ENCODE measurements at regions of chr9 and their contacts with region 1.

Region 1: GRCh38 chr9:137589441-137590115 is 734 bp downstream of the ZMYND19 start:
- DNase-seq: peak; percentile 45
- ATAC-seq: peak; percentile 17
- H3K4me3 Mint-ChIP-seq: peak overlapping the region; percentile 86
- H3K27ac Mint-ChIP-seq: peak overlapping the region; percentile 79
- H3K4me1 Mint-ChIP-seq: peaks cover 22% of the 10 kb centered on the region
- H3K27me3 Mint-ChIP-seq: no peaks in the 10 kb centered on the region

Region 2: DNA sequence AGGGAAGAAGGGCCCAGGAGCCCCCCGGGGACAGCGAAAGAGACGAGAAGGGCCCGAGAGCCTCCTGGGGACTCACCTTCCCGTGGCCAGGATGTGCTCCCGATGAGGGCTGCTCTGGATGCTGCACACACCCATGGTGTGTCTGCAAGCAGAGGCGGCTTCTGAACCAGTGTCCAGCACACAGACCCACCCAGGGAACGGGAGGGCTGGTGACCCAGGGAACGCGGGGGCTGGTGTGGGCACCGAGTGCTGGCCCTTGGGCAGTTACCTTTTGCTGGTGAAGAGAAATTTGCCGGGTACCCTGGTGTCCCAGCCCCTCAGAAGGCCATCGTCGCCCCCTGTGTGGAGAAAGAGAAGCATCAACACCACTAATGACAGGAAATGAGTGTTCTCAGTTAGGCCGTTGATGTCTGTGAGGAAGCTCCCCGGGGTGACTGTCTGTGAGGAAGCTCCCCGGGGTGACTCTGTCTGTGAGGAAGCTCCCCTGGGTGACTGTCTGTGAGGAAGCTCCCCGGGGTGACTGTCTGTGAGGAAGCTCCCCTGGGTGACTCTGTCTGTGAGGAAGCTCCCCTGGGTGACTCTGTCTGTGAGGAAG is 24.7 kb before region 1 on chr9:
- CTCF ChIA-PET with region 1: no interaction called
- POLR2A ChIA-PET with region 1: no interaction called
- DNase-seq: no peak
- ATAC-seq: no peak
- H3K4me3 Mint-ChIP-seq: no peak overlapping the region
- H3K27ac Mint-ChIP-seq: peak overlapping the region; percentile 7
- H3K4me1 Mint-ChIP-seq: peaks cover 13% of the 10 kb centered on the region
- H3K27me3 Mint-ChIP-seq: no peaks in the 10 kb centered on the region

Region 3: GRCh38 chr9:137578518-137579258 is 10.9 kb before region 1 on chr9 and contains the start of gene DPH7:
- CTCF ChIA-PET with region 1: interaction called, 16 read pairs
- POLR2A ChIA-PET with region 1: interaction called, 9 read pairs
- DNase-seq: peak; percentile 96
- ATAC-seq: peak; percentile 99
- H3K4me3 Mint-ChIP-seq: peak within 1 kb of the TSS; percentile 81
- H3K27ac Mint-ChIP-seq: peak within 1 kb of the TSS; percentile 72
- H3K4me1 Mint-ChIP-seq: peaks cover 35% of the 10 kb centered on the region
- H3K27me3 Mint-ChIP-seq: no peaks in the 10 kb centered on the region
- total RNA-seq, gene DPH7: 36.8 to 37.1 TPM

Region 4: GRCh38 chr9:137602661-137603060 is 13.1 kb after region 1 on chr9:
- CTCF ChIA-PET with region 1: interaction called, 10 read pairs
- POLR2A ChIA-PET with region 1: interaction called, 3 read pairs
- DNase-seq: no peak
- ATAC-seq: no peak
- H3K4me3 Mint-ChIP-seq: no peak overlapping the region
- H3K27ac Mint-ChIP-seq: no peak overlapping the region
- H3K4me1 Mint-ChIP-seq: peaks cover 36% of the 10 kb centered on the region
- H3K27me3 Mint-ChIP-seq: no peaks in the 10 kb centered on the region

Region 5: DNA sequence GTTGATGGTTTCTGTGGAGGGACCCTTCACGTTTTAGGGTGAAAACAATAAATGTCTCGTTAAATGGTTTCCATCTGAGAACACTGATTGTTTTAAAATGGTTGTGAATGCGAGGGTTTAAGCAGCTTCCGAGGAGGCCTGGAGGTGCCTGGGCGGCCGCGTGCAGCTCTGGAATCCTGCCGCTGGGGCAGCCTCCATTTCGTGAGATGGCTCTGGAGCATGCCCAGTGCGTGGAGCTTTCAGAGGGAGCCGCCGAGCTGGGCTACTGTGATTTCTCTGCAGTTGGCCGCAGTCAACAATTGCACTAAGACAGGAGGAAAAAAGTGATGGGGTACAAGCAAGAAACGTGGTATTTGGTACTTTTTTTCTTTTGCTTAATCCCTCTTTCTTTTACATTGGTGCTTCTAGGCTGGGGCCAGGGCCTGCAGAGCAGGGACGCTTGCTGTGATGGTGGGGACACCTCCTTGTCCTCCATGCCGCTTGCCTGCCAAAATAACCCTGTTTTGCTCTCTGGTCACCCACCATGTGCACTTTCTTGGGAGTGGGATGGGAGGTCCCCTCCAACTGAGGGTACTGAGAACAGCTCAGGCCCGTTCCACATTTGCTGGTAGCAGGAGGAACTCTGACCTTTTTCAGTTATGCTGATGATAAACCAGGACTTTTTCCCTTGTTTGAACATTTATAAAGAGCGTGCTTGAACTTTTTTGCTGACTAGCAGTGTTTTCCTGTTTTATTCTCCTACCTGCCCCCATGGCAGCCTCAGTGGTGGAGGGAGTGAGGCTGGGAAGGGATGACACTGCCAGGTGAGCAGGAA is 76.3 kb after region 1 on chr9:
- CTCF ChIA-PET with region 1: no interaction called
- POLR2A ChIA-PET with region 1: no interaction called
- DNase-seq: no peak
- ATAC-seq: no peak
- H3K4me3 Mint-ChIP-seq: no peak overlapping the region
- H3K27ac Mint-ChIP-seq: no peak overlapping the region
- H3K4me1 Mint-ChIP-seq: peaks cover 17% of the 10 kb centered on the region
- H3K27me3 Mint-ChIP-seq: no peaks in the 10 kb centered on the region